Heart left ventricle (tissue), 16 donors: ENCODE measurements at regions of chr2 and their contacts with region 1.

Region 1: GRCh38 chr2:229921892-229922445 is at the start of gene TRIP12:
- DNase-seq: peak; percentile 93 to 96 (median 95)
- ATAC-seq: peak; percentile 91 to 95 (median 93)
- H3K4me3 ChIP-seq: peak within 1 kb of the TSS; percentile 77 to 98 (median 90)
- H3K27ac ChIP-seq: peak within 1 kb of the TSS; percentile 90 to 100 (median 98)
- H3K4me1 ChIP-seq: peaks cover 0 to 42% (median 25%) of the 10 kb centered on the region in 12 donors
- H3K27me3 ChIP-seq: no peaks in the 10 kb centered on the region
- CTCF ChIP-seq: no peak
- POLR2A ChIP-seq: no peak
- total RNA-seq, gene TRIP12: 90.3 to 245 (median 208) TPM

Region 2: DNA sequence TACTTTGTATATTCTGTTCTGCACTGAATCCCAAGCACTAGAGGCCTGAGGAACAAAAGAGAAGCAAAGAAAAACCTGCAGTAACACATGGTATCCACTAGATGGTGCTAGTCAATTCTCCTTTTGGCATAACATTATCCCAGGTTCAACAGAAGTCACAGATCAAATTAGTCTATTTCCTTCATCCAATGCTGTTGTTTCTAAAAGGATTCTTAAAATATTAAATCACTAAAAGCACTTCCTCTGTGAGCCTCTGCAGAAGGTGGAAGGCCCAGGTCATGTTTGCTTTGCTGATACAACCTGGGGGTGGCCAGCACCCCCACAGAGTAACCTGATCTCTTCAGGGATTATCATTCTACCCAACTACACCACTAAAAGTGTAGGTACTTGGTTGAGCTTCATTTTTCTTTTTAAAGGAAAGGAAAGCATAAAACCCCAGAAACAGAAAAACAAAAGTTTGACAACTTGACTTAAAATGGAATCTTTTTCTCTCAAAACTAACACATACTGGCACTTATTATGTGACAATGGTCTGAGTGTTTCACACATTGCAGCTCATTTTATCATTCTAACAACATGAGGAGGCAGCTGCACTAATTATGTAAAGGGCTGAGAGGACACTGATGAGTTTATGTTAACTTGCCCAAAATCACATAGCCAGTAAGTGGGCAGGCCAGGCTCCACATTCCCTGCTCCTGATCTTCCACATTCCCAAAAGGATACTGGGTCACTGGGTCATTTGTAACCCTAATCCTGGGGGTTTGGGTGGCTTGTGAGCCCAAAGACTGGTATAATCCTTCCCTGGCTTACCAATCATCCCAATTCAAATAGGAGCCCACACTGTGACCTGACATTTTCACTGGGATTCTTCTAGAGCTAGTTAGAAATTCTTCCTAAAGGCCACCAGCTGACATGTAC is 140.9 kb before region 1 on chr2:
- intact Hi-C with region 1: loop called in 1 of 10 experiments (anchors 5 kb)
- DNase-seq: no peak
- ATAC-seq: peak in 3 of 4 donors; percentile 72 to 84 (median 79)
- H3K4me3 ChIP-seq: no peak overlapping the region
- H3K27ac ChIP-seq: no peak overlapping the region
- H3K4me1 ChIP-seq: peaks cover 0 to 11% (median 3%) of the 10 kb centered on the region in 12 donors
- H3K27me3 ChIP-seq: no peaks in the 10 kb centered on the region
- CTCF ChIP-seq: peak; percentile 81 to 93 (median 90)
- POLR2A ChIP-seq: no peak

Region 3: DNA sequence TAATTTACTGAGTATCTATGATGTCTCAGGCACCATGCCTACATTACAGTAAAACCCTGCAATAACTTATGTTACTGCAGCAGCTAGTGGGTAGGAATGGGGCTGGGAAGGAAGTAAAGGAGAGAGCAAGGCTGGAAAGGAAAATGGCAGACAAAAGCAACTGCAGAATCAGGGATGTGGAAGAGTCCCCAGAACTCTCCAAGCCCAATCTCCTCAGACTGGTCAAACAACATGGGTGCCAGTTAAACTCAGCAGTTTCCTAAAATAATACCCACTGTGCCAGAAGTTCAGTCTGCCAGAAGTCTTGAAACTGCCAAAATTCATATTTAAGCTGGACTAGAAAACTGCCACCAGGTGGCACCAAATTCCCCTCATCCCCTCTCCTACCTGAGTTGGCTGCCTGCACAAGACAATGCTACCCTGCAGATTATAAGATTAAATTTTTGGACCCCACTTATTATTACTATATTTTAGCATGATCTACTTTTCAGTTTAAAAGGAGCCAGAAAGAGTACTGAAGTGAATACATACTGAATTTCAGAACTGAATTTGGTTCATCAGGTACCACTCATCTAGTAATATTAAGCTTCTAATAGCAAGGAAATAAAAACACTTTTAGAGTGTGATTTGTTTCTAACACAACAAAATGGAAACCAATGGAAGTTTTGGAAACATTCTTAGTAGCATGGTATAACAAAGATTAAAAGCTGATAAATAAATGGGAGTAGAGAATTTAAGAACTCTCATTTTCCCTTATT is 120.8 kb before region 1 on chr2:
- intact Hi-C with region 1: loop called in 9 of 10 experiments (anchors 1 to 10 kb)
- DNase-seq: peak in 4 of 5 donors; percentile 30 to 58 (median 40)
- ATAC-seq: peak in 3 of 4 donors; percentile 41 to 61 (median 56)
- H3K4me3 ChIP-seq: no peak overlapping the region
- H3K27ac ChIP-seq: peak overlapping the region in 1 of 12 donors; percentile 7
- H3K4me1 ChIP-seq: peaks cover 0 to 31% (median 12%) of the 10 kb centered on the region in 12 donors
- H3K27me3 ChIP-seq: no peaks in the 10 kb centered on the region
- CTCF ChIP-seq: peak; percentile 59 to 83 (median 75)
- POLR2A ChIP-seq: no peak

Region 4: GRCh38 chr2:230262246-230262645 is 340.3 kb after region 1 on chr2:
- intact Hi-C with region 1: no loop called
- DNase-seq: no peak
- ATAC-seq: no peak
- H3K4me3 ChIP-seq: no peak overlapping the region
- H3K27ac ChIP-seq: no peak overlapping the region
- H3K4me1 ChIP-seq: no peaks in the 10 kb centered on the region
- H3K27me3 ChIP-seq: no peaks in the 10 kb centered on the region
- CTCF ChIP-seq: no peak
- POLR2A ChIP-seq: no peak